ENCODE measurements at regions of chr3 and their contacts with region 1.

Region 1: DNA sequence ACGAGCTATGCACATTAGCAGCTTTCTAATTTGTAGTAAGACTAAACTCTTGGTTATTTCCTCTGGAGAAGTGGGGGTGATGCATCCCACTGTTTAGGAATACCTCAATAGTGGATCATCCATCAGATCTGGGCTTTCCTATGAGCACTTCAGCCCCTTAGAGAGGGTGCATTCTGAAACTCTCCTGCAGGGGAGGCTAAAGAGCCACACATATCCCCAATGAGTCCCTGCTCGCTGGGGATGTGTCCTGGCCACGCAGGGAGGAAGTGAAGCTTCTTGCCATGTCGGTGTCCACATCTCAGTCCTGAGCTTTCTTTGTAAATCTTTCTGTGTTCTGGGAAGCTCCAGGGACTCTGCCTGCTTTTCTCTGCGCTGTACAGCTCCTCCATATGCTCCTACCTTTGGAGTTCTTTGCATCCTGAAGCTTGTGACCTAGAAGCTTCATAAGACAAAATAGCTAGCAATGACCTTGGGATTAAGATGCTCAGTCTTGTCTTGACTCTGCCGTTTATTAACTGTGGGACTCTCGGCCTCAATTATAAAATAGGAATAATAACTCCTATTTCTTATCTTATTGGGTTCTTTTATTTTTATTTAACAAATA is 28.3 kb upstream of the MASP1 start:
- H3K4me3 Mint-ChIP-seq: no peak overlapping the region
- H3K27ac Mint-ChIP-seq: no peak overlapping the region
- H3K4me1 Mint-ChIP-seq: no peaks in the 10 kb centered on the region
- H3K27me3 Mint-ChIP-seq: peaks cover 16% of the 10 kb centered on the region

Region 2: GRCh38 chr3:187679638-187680396 is 360.0 kb after region 1 on chr3:
- intact Hi-C with region 1: loop called (anchors 1 kb)
- H3K4me3 Mint-ChIP-seq: no peak overlapping the region
- H3K27ac Mint-ChIP-seq: no peak overlapping the region
- H3K4me1 Mint-ChIP-seq: peaks cover 5% of the 10 kb centered on the region
- H3K27me3 Mint-ChIP-seq: peaks cover 23% of the 10 kb centered on the region